ENCODE measurements at regions of chr5 and their contacts with region 1.

Region 1: DNA sequence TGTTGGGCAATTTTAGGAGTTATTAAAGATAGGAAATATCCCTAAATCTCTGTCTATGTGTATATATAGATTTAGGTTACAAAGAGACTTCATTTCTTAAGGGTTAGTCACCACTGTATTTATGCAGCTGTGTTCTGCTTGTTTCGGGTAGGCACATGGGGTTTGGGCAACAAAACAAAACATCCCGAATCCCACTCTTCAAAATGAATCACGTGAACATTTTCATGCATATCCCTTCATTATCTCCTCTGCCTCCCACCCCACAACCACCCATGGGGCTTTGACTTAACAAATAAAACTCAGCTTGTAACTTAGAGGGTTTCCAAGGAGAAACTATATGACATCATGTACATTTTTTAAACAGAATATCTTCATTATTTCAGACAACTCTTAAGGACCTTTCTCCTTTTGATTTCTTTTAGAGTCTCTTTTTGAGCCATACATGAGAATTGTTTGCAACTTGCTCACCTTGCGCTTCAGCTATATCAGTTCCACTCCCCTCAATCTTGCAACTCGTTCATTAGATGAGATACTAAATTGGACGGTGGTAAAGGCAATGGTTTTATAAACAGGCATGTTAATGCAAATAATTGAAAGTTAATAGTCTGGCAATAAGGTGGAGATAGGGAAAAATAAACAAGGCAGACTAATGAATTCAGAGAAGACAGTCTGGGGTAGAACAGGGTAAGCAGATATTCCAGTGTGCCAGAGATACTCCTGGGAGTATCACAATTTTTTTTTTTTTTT is 136.7 kb downstream of the CD180 start:
- DNase-seq: no peak
- ATAC-seq: no peak
- H3K4me3 ChIP-seq: no peak overlapping the region
- H3K27ac ChIP-seq: peak overlapping the region in 1 of 4 donors; percentile 0
- H3K4me1 ChIP-seq: peaks cover 19 to 30% of the 10 kb centered on the region in 2 donors
- H3K27me3 ChIP-seq: no peaks in the 10 kb centered on the region
- CTCF ChIP-seq: no peak
- POLR2A ChIP-seq: no peak

Region 2: DNA sequence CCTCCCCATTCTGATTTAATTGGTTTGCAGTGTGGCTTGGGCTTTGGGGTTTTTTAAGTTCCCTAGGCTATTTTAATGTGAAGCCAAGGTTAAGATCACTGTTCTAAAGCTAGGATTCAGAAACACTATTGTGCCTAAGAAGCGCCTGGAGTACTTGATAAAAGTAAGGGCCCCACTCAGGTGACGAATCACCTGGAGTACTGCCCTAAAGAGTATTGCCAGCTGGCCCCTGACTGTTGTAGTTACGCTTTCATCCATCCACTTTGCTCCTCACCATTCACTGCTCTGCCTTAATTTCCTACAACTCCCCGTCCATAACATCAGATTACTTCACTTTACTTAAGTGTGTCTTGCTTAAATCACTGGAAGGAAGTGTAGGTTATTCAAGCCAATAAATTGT is 17.4 kb after region 1 on chr5:
- in situ Hi-C with region 1: no loop called
- intact Hi-C with region 1: loop called (anchors 2 kb)
- DNase-seq: no peak
- ATAC-seq: no peak
- H3K4me3 ChIP-seq: no peak overlapping the region
- H3K27ac ChIP-seq: no peak overlapping the region
- H3K4me1 ChIP-seq: no peaks in the 10 kb centered on the region
- H3K27me3 ChIP-seq: no peaks in the 10 kb centered on the region
- CTCF ChIP-seq: no peak
- POLR2A ChIP-seq: no peak